Activated CD8-positive, alpha-beta T cell treated with anti-CD3 and anti-CD28 coated beads for 36 hours (primary cell): ENCODE measurements at regions of chr17 and their contacts with region 1.

Region 1: GRCh38 chr17:73645050-73645978 is 1.1 kb upstream of the SDK2 start:
- DNase-seq: peak; percentile 60
- ATAC-seq: peak; percentile 69
- H3K4me3 Mint-ChIP-seq: peak overlapping the region; percentile 44
- H3K27ac Mint-ChIP-seq: no peak overlapping the region
- H3K4me1 Mint-ChIP-seq: peaks cover 14% of the 10 kb centered on the region
- H3K27me3 Mint-ChIP-seq: peaks cover 2% of the 10 kb centered on the region
- CTCF ChIP-seq: no peak

Region 2: DNA sequence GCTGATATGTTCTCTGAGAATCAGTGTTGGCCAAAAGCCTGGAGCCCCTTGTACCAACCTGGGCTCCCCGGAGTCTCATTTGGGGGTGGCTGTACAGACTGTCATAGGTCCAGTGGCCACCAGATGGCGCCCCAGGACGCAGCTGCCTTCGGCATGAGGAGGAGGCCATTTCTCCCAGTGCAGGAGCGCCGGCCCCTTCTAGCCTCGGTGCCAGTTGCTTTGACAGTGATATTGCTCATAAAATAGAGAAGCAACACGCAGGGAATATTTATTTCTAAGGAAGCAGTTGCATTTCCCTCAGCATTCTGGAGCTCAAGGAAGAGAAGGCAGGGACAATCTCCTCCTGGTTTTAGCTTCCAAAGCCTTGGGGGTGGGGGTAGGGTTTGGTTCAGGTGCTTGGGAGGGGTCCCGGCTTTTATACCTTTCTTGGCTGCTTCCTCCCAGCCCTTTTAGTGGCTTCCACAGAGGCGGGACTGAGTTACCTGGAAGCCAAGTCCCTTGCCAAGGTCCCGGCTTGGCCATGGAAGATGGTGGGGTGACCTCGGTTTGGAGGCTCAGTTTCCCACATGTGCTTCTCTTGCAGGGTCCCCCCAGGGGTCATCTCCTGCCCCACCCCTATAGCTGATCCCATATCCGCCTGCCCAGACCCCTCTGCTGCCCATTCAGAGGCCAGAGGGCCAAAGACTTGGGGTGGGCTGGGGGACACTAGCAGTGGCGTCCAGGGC is 215.7 kb before region 1 on chr17:
- CTCF ChIA-PET with region 1: interaction called, 13 read pairs
- POLR2A ChIA-PET with region 1: no interaction called
- intact Hi-C with region 1: no loop called
- DNase-seq: peak; percentile 92
- ATAC-seq: peak; percentile 98
- H3K4me3 Mint-ChIP-seq: no peak overlapping the region
- H3K27ac Mint-ChIP-seq: no peak overlapping the region
- H3K4me1 Mint-ChIP-seq: peaks cover 9% of the 10 kb centered on the region
- H3K27me3 Mint-ChIP-seq: no peaks in the 10 kb centered on the region
- CTCF ChIP-seq: peak; percentile 92

Region 3: DNA sequence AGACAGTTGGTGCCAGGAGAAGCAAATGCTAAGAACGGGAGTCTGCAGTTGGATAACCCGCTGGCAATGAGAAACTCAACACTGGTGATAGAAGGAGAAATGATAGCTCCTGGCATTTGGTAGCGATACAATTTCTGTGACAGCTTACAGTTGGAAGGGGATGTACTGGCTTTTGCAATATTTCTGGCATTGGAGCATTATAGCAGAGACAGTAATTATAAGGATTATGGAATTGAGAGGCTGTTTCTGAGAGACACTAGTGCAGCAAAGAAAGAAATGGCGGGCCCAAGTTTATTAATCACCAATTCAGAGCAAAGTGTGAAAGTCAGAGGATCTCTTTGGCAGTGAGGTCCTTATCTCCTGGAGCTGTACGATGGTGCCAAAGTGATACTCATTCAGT is 15.1 kb after region 1 on chr17:
- CTCF ChIA-PET with region 1: interaction called, 14 read pairs
- POLR2A ChIA-PET with region 1: no interaction called
- intact Hi-C with region 1: no loop called
- DNase-seq: no peak
- ATAC-seq: no peak
- H3K4me3 Mint-ChIP-seq: no peak overlapping the region
- H3K27ac Mint-ChIP-seq: no peak overlapping the region
- H3K4me1 Mint-ChIP-seq: no peaks in the 10 kb centered on the region
- H3K27me3 Mint-ChIP-seq: no peaks in the 10 kb centered on the region
- CTCF ChIP-seq: no peak

Region 4: DNA sequence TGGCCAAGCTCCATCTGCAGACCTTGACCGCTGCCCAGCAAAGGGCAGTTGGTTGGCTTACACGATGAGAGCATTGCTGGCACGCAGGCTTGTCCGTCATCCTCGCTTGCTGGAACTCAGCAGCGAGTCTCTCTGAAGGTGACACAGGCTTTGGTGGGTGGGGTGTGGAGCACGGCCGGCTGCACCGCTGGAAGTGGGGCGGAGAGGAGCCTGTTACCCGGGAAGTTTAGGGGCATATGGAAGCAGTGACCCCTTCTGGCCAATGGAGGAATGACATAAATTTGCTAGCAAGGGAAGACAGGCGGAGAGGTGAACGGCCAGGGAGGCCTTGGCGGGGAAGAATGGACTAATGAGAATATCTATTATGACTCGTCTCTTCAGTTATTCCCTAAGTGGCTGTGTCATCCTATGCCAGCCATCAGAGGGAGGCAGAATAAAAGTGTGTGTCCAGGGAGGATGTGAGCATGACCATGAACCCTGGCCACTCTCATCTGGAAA is 64.8 kb after region 1 on chr17:
- CTCF ChIA-PET with region 1: interaction called, 34 read pairs
- POLR2A ChIA-PET with region 1: no interaction called
- intact Hi-C with region 1: loop called (anchors 5 kb)
- DNase-seq: peak; percentile 81
- ATAC-seq: peak; percentile 89
- H3K4me3 Mint-ChIP-seq: no peak overlapping the region
- H3K27ac Mint-ChIP-seq: no peak overlapping the region
- H3K4me1 Mint-ChIP-seq: peaks cover 8% of the 10 kb centered on the region
- H3K27me3 Mint-ChIP-seq: no peaks in the 10 kb centered on the region
- CTCF ChIP-seq: peak; percentile 89

Region 5: DNA sequence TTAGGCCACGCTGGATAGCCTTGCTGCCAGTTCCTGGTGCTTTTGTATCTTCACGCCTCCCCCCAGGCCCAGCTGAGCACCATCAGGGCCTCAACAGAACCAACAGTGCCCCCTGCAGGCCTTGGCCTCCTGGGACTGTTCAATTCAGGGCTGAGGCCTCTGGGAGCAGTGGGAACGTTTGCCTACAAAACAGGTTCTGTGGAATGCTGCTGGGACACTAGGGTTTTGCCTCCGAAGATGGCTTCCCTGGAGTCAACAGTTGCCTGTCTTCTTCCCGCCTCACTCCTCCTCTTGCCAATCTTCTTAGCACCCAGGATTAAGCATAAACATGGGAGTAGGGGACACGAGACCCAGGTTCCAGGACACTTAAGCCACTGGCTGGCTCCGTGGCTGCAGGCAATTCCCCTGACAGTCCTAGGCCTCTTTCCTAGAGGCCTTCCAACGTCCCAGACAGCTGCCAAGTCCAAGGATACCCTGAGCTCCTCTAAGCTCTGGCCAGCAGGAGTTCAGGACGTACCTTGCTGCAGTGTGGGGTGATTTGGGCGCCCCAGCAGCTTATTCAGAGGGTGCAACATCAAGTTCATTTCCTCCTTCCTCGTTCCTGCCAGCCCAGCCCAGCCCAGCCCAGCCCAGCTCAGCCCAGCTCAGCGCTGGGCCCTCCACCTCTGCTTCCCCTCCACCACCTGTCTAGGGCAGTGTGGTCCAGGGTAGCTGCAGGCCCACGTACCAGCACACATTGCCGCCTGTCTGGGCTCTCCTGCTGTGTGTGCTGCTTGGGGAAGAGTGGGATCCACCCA is 311.6 kb after region 1 on chr17:
- CTCF ChIA-PET with region 1: interaction called, 7 read pairs
- POLR2A ChIA-PET with region 1: no interaction called
- intact Hi-C with region 1: loop called (anchors 10 kb)
- DNase-seq: peak; percentile 75
- ATAC-seq: peak; percentile 56
- H3K4me3 Mint-ChIP-seq: no peak overlapping the region
- H3K27ac Mint-ChIP-seq: no peak overlapping the region
- H3K4me1 Mint-ChIP-seq: no peaks in the 10 kb centered on the region
- H3K27me3 Mint-ChIP-seq: peaks cover 3% of the 10 kb centered on the region
- CTCF ChIP-seq: peak; percentile 50